GM12878 (cell line): ENCODE measurements at regions of chr18 and their contacts with region 1.

Region 1: GRCh38 chr18:27750014-27750413 is 426.9 kb downstream of the CDH2 start:
- DNase-seq: no peak
- ATAC-seq: peak; percentile 88
- H3K4me3 ChIP-seq: no peak overlapping the region
- H3K27ac ChIP-seq: no peak overlapping the region
- H3K4me1 ChIP-seq: no peaks in the 10 kb centered on the region
- H3K27me3 ChIP-seq: no peaks in the 10 kb centered on the region
- CTCF ChIP-seq: peak; percentile 24 to 58 (median 38); a peak in 4 of 6 replicates
- EP300 ChIP-seq: no peak
- POLR2A ChIP-seq: no peak
- RAD21 ChIP-seq: peak; percentile 38; the same call in 1 of the 2 replicates

Region 2: DNA sequence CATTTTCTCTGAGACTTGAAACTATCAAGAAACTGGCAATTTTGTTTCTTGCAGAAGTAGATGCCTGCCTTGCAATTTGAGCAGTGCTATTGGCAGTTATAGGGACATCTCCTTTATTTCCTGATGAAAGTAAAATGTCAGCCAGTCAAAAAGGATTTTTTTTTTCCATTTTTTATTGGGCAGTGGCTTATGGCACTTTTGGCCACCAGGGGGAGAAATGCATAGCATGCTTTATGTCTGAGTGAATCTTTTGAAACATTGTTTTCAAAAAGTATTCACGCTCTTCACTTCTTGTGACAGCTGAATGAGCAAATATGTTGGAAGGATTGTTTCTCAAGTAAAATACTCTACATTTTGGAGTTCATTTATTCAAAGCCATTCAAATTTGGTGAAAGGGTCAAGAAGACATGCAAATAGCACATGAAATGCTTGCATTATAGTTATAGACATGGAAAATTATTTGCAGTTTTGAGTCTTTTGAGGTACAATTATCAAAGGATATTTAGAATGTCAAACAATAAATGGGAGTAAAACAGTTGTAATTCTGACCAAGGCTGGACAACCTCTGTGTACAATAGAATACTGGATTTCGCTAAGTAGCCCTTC is 64.1 kb before region 1 on chr18:
- CTCF ChIA-PET with region 1: interaction called, 15 read pairs
- POLR2A ChIA-PET with region 1: no interaction called
- RAD21 ChIA-PET with region 1: interaction called, 6 read pairs
- SMC1A ChIA-PET with region 1: interaction called, 4 read pairs
- in situ Hi-C with region 1: no loop called
- intact Hi-C with region 1: loop called (anchors 5 kb)
- DNase-seq: no peak
- ATAC-seq: peak; percentile 34; the same call in 1 of the 3 replicates
- H3K4me3 ChIP-seq: no peak overlapping the region
- H3K27ac ChIP-seq: no peak overlapping the region
- H3K4me1 ChIP-seq: no peaks in the 10 kb centered on the region
- H3K27me3 ChIP-seq: no peaks in the 10 kb centered on the region
- CTCF ChIP-seq: peak; percentile 38 to 47 (median 40); a peak in 4 of 6 replicates
- EP300 ChIP-seq: no peak
- POLR2A ChIP-seq: no peak
- RAD21 ChIP-seq: peak; percentile 41; the same call in 1 of the 2 replicates

Region 3: GRCh38 chr18:27808683-27809082 is 58.7 kb after region 1 on chr18:
- CTCF ChIA-PET with region 1: no interaction called
- POLR2A ChIA-PET with region 1: no interaction called
- RAD21 ChIA-PET with region 1: no interaction called
- SMC1A ChIA-PET with region 1: no interaction called
- in situ Hi-C with region 1: no loop called
- intact Hi-C with region 1: loop called (anchors 10 kb)
- DNase-seq: no peak
- ATAC-seq: no peak
- H3K4me3 ChIP-seq: no peak overlapping the region
- H3K27ac ChIP-seq: no peak overlapping the region
- H3K4me1 ChIP-seq: no peaks in the 10 kb centered on the region
- H3K27me3 ChIP-seq: no peaks in the 10 kb centered on the region
- CTCF ChIP-seq: no peak
- EP300 ChIP-seq: no peak
- POLR2A ChIP-seq: no peak
- RAD21 ChIP-seq: no peak

Region 4: DNA sequence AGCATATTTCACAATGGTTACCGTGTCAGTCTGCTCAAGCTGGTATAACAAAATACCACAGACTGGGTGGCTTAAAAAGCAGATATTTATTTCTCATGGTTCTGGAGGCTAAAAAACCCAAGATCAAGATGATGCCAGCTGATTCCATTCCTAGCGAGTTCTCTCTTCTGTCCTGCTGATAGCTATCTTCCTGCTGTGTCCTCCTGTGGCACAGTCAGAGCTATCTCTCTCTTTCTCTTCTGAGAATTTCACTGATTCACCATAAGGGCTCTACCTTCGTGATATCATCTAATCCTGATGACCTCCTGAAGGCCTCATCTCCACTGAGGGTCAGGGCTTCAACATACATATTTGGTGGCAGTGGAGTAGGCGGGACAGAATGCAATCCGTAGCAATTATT is 153.9 kb after region 1 on chr18:
- CTCF ChIA-PET with region 1: no interaction called
- POLR2A ChIA-PET with region 1: no interaction called
- RAD21 ChIA-PET with region 1: no interaction called
- SMC1A ChIA-PET with region 1: no interaction called
- in situ Hi-C with region 1: no loop called
- intact Hi-C with region 1: no loop called
- DNase-seq: no peak
- ATAC-seq: no peak
- H3K4me3 ChIP-seq: no peak overlapping the region
- H3K27ac ChIP-seq: no peak overlapping the region
- H3K4me1 ChIP-seq: no peaks in the 10 kb centered on the region
- H3K27me3 ChIP-seq: no peaks in the 10 kb centered on the region
- CTCF ChIP-seq: no peak
- EP300 ChIP-seq: no peak
- POLR2A ChIP-seq: no peak
- RAD21 ChIP-seq: no peak

Region 5: DNA sequence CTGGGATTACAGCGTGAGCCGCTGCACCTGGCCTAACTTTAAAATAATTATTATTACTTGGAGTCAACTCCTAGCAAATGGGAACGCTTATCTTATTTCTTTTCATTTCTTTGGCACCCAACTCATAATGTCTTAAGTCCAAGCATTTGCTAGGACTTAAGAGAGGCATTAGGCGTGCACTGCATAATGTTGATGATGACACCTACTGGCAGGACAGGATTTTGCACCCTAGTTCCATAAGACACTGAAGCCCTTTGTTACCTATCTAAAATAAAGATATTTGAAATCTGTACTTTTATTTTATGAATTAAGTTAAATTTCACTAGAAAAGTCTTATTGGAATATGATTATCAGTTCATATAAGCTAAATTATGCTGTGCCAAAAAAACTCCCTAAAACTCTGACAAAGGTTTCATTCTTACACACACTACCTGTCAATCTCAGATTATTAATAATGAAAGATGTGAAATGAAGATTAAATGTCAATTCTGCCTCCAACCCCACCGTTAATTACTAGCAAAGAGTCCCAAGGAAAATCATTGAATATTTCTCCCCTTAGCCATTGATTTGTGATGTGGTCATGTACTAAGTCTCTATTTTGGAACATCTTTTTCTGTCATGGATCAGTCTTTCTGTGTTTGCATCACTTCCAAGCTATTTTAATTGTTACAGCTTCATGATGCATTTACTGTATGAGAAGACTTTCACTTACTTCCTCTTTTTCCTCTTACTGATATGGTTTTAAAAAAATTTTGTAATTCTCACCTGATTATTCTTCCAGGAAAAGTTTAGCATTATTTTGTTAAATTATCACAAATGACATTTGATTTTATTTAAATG is 439.6 kb after region 1 on chr18:
- CTCF ChIA-PET with region 1: no interaction called
- POLR2A ChIA-PET with region 1: no interaction called
- RAD21 ChIA-PET with region 1: no interaction called
- SMC1A ChIA-PET with region 1: interaction called, 3 read pairs
- in situ Hi-C with region 1: no loop called
- intact Hi-C with region 1: loop called (anchors 10 kb)
- DNase-seq: peak; percentile 5
- ATAC-seq: peak; percentile 94
- H3K4me3 ChIP-seq: no peak overlapping the region
- H3K27ac ChIP-seq: no peak overlapping the region
- H3K4me1 ChIP-seq: no peaks in the 10 kb centered on the region
- H3K27me3 ChIP-seq: no peaks in the 10 kb centered on the region
- CTCF ChIP-seq: peak; percentile 61 to 69 (median 67)
- EP300 ChIP-seq: no peak
- POLR2A ChIP-seq: no peak
- RAD21 ChIP-seq: peak; percentile 58